Activated T-helper 1 cell treated with anti-CD3 and anti-CD28 coated beads, Interleukin-12 subunit alpha, Interleukin-12 subunit beta, Interleukin-2, Interleukin-4 antibody, amounts not matched to agents 30 ng/mL and 10 ng/mL and 1 ng/mL, durations not matched to agents 14 hours and 24 hours and 36 hours (primary cell): ENCODE measurements at regions of chr15 and their contacts with region 1.

Region 1: DNA sequence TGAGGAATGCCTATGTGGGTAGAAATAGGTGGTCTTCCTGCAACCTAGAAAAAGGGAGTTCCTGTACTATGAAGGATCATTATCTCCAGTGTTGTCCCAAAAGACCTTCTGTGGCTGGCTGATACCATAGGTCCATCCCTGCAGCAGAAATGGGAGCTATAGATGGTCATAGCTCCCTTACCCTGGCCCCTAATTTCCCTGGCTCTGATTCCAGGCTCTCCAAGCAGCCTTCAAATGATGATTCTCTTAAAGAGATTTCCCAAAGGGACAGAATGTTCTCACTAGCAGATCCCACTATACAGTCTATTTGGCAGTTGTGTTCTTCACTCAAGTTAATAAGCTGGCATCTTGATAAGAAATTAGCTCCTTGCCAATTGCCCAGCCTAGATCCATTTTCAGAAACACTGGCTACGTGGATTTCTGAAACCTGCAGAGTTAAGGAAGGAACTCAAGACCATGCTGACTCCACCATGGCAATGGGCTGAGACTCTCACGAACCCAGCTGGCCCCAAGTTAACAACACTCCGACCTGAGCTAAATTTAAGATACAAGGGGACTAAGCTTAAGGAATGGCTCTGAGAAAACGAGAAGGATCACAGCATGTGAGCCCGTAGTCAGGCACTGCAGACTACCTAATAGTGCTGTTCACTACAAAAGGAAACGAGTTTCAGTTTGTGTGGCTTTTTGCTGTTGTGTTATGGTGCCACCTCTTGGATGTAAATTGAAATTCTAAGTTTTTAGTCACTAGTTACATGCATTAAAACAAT is 11.4 kb downstream of the C15orf40 start:
- DNase-seq: peak; percentile 28
- H3K4me3 Mint-ChIP-seq: peak overlapping the region; percentile 60
- H3K27ac Mint-ChIP-seq: peak overlapping the region; percentile 9
- H3K4me1 Mint-ChIP-seq: peaks cover 9% of the 10 kb centered on the region
- H3K27me3 Mint-ChIP-seq: no peaks in the 10 kb centered on the region

Region 2: DNA sequence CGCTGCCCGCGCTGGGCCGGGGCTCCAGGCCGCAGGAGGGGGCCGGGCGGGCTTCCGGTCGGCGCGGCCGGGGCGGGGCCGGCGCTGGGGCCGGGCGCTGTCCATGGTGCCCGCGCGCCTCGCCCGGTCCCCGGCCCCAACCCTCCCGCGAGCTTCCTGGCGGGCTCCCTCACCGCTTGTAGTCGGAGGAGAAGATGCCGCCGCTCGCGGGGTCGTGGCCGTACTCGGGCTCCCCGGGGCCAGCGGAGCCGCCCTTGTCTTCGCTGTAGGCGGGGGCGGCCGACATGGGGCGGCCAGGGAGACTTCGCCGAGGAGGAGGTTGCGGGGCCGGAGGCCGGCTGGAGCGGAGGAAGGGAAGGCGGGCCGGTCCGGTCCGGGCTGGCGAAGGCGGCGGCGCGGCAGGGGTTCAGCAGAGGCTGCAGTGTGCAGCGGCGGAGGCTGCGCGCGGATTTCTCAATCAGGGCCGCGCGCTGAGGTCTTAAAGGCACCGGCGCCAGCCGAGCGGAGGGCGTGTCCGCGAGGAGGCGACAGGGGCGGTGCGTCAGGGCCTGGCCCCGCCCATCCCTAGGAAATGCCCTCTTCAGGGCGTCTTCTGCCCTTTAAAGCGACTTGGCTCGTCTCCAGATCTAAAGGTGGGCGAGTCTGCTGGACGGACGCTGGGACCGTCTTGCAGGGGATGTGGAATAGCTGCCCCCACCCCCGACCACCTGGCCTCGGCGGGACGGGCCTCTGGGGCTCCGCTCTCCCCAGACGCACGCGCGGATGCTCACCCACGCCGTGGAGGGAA is 290.5 kb before region 1 on chr15 and contains the start of gene AP3B2:
- intact Hi-C with region 1: no loop called
- DNase-seq: peak; percentile 71
- H3K4me3 Mint-ChIP-seq: peak within 1 kb of the TSS; percentile 62
- H3K27ac Mint-ChIP-seq: no peak within 1 kb of the TSS
- H3K4me1 Mint-ChIP-seq: no peaks in the 10 kb centered on the region
- H3K27me3 Mint-ChIP-seq: peaks cover 6% of the 10 kb centered on the region
- total RNA-seq, gene AP3B2: 0.21 TPM in 1 of 2 replicates, not detected in the other

Region 3: GRCh38 chr15:82832601-82833361 is 167.3 kb before region 1 on chr15:
- intact Hi-C with region 1: loop called (anchors 1 kb)
- DNase-seq: peak; percentile 17
- H3K4me3 Mint-ChIP-seq: peak overlapping the region; percentile 57
- H3K27ac Mint-ChIP-seq: peak overlapping the region; percentile 87
- H3K4me1 Mint-ChIP-seq: peaks cover 54% of the 10 kb centered on the region
- H3K27me3 Mint-ChIP-seq: peaks cover 2% of the 10 kb centered on the region

Region 4: DNA sequence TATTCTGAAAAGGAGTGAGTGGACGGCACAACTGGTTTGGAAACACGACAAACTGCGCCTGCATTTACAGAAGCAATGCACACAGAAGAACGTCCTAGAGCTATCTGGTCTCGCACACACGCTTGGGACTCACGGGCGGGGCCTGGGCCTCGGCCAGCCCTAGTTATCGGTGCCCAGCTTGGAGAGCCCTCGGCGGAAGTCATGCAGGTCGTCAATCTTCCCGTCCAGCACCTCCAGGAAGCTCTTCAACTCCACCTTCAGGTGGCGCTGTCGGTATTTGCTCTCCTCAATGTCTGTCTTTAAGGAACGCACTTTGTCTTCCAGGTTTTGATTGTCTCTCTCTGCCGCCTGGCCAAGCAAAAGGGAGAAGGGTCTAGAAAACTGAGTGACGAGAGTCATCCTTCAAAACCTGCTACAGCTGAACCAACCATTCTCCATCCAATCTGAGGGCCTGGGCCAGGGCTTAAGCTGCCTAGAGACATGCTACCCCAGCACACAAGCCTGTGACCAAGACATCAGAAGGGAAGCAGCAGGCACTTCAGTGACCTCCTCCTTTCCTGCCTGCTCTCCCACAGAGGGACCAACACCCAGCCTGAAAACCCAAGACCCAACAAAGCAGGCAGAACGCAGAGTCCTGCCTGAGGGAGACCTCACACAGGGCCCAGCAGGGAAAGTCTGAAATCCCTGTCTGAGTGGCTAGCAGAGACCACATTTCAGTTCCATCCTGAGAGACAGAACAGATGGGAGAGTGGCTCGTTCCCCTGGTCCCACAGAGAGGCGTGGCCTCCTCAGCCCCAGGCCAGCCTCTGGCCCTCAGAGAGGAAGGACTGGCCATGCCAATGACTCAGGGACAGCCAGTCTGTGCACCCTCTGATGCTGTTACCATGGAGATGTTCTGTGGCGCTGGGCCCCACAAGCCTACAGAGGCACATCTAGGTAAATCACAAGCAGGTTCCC is 150.3 kb before region 1 on chr15:
- intact Hi-C with region 1: loop called (anchors 1 kb)
- DNase-seq: peak; percentile 39
- H3K4me3 Mint-ChIP-seq: no peak overlapping the region
- H3K27ac Mint-ChIP-seq: peak overlapping the region; percentile 1
- H3K4me1 Mint-ChIP-seq: peaks cover 8% of the 10 kb centered on the region
- H3K27me3 Mint-ChIP-seq: peaks cover 9% of the 10 kb centered on the region

Region 5: GRCh38 chr15:82950746-82951370 is 49.2 kb before region 1 on chr15:
- intact Hi-C with region 1: loop called (anchors 1 kb)
- DNase-seq: no peak
- H3K4me3 Mint-ChIP-seq: no peak overlapping the region
- H3K27ac Mint-ChIP-seq: no peak overlapping the region
- H3K4me1 Mint-ChIP-seq: no peaks in the 10 kb centered on the region
- H3K27me3 Mint-ChIP-seq: peaks cover 22% of the 10 kb centered on the region

Region 6: GRCh38 chr15:83011271-83012075 is 11.4 kb after region 1 on chr15 and contains the start of gene C15orf40:
- intact Hi-C with region 1: no loop called
- DNase-seq: peak; percentile 84
- H3K4me3 Mint-ChIP-seq: peak within 1 kb of the TSS; percentile 99
- H3K27ac Mint-ChIP-seq: peak within 1 kb of the TSS; percentile 98
- H3K4me1 Mint-ChIP-seq: peaks cover 50% of the 10 kb centered on the region
- H3K27me3 Mint-ChIP-seq: no peaks in the 10 kb centered on the region
- total RNA-seq, gene C15orf40: 24.2 and 29.0 TPM in 2 replicates